GM12878 (cell line): ENCODE measurements at regions of chr19 and their contacts with region 1.

Region 1: GRCh38 chr19:10245189-10245939 is 6.7 kb upstream of the MRPL4 start:
- DNase-seq: no peak
- ATAC-seq: peak; percentile 74
- H3K4me3 ChIP-seq: no peak overlapping the region
- H3K27ac ChIP-seq: peak overlapping the region; percentile 55
- H3K4me1 ChIP-seq: peaks cover 54% of the 10 kb centered on the region
- H3K27me3 ChIP-seq: no peaks in the 10 kb centered on the region
- CTCF ChIP-seq: no peak
- EP300 ChIP-seq: no peak
- POLR2A ChIP-seq: no peak
- RAD21 ChIP-seq: no peak

Region 2: DNA sequence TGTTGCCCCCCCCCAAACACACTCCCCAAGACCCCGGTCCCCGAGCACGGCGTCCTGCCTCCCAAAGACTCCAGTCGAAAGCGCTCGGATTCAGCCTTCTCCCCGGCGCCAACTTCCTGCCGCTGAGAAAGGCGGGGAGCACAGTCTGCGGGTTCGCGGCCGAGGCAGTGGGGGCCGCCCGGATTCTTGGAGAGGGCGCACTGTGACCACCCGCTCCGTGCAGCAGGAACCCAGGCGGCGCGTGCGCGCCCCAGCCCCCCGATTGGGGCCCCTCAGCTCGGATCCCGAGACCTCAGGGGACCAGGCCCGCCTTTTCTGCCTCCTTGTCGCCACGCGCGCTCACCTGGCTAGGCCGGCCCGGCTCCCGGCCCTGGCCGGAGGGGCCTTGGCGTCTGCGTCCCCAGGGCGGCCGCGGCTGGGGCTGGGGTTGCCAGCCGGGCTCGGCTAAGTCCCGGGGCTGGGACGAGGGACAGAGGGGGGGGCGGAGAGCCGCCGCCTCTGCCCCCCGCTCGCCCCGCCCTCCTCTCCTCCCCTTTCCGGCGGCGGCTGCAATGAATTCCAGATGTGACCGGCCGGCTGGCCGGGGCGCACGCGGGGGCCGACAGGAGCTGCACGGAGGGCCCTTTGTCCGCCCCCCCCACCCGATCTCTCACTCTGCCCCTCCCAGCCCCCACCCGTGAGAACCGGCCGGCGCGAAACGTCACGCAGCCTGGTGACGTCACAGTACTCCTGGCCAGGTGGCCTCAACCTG is 14.3 kb before region 1 on chr19 and contains the start of gene S1PR2:
- CTCF ChIA-PET with region 1: interaction called, 148 read pairs
- POLR2A ChIA-PET with region 1: interaction called, 35 read pairs
- RAD21 ChIA-PET with region 1: interaction called, 98 read pairs
- SMC1A ChIA-PET with region 1: interaction called, 78 read pairs
- in situ Hi-C with region 1: no loop called
- intact Hi-C with region 1: loop called (anchors 1 kb)
- DNase-seq: no peak
- ATAC-seq: peak; percentile 67
- H3K4me3 ChIP-seq: peak within 1 kb of the TSS; percentile 90
- H3K27ac ChIP-seq: peak within 1 kb of the TSS; percentile 97
- H3K4me1 ChIP-seq: peaks cover 44% of the 10 kb centered on the region
- H3K27me3 ChIP-seq: no peaks in the 10 kb centered on the region
- CTCF ChIP-seq: 0 out of 6 replicates have a peak, but pooled peaks of 1 of the 3 experiments have one; percentile 19
- EP300 ChIP-seq: no peak
- POLR2A ChIP-seq: peak; percentile 81
- RAD21 ChIP-seq: no peak
- polyA plus RNA-seq, gene S1PR2: 4.9 to 9.6 TPM

Region 3: DNA sequence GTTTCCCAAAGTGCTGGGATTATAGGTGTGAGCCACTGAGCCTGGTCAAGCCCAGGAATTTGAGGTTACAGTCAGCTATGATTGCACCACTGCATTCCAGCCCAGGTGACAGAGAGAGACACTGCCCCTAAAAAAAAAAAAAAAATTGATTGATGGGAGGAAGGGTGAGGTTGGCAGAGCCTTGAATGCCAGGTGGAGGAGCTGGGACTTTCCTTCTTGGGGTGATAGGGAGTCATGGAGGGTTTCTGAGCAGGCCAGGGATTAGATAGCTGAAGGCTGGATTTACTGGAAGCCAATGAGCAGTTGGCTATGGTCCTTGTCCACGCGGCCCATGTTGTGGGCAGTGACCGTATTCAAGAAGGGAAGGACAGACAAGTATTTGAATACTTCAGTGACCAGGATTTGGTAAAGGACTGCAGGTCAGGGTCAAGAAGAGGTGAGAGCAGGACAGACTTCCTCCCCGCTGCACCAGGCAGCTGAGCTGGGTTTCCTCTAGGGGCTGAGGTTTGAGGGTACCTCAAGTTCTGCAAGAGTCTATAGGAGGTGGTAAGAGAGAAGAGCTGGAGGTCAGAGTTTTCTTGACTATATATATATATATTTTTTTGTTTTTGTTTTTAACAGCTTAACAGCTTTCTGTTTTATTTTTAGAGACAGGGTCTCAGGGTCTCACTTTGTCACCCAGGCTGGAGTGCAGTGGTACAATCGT is 34.5 kb after region 1 on chr19:
- CTCF ChIA-PET with region 1: no interaction called
- POLR2A ChIA-PET with region 1: no interaction called
- RAD21 ChIA-PET with region 1: no interaction called
- SMC1A ChIA-PET with region 1: no interaction called
- in situ Hi-C with region 1: no loop called
- intact Hi-C with region 1: no loop called
- DNase-seq: no peak
- ATAC-seq: peak; percentile 30
- H3K4me3 ChIP-seq: peak overlapping the region; percentile 47; the same call in 1 of the 2 replicates
- H3K27ac ChIP-seq: no peak overlapping the region
- H3K4me1 ChIP-seq: peaks cover 11% of the 10 kb centered on the region
- H3K27me3 ChIP-seq: no peaks in the 10 kb centered on the region
- CTCF ChIP-seq: no peak
- EP300 ChIP-seq: no peak
- POLR2A ChIP-seq: peak; percentile 32; the same call in 1 of the 2 replicates
- RAD21 ChIP-seq: no peak

Region 4: DNA sequence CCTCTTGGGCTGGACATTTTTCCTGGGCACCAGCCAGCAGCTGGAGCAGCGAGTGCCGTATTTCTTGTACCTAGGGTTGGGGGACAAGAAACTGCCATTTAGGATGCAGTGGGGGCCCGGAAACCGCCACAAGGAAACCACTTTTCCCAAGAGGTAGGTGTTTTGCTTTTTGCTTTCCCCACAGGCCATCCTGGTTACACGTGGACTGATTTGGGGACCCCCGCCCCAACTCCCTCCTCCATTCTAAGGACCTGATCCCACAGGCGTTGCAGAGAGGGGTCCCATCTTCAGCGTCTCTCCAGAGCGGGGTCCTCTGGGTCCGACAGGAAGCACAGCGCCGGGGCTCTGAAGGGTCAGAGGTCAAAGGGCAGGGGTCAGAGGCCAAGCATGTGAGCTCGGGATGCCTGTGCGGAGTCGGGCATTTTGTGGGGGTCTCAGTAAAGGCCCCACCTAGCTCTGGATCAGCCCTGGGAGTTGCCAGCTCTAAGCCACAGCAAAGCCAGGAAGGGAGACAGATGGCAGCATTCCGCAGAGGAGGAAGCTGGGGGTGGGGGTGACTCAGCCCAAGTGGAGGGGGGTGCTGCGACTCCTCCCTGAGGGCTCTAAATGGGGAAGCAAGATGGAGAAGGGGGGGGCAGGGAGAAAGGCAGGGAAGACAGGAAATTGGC is 59.9 kb after region 1 on chr19:
- CTCF ChIA-PET with region 1: no interaction called
- POLR2A ChIA-PET with region 1: no interaction called
- RAD21 ChIA-PET with region 1: no interaction called
- SMC1A ChIA-PET with region 1: no interaction called
- in situ Hi-C with region 1: no loop called
- intact Hi-C with region 1: no loop called
- DNase-seq: no peak
- ATAC-seq: no peak
- H3K4me3 ChIP-seq: no peak overlapping the region
- H3K27ac ChIP-seq: no peak overlapping the region
- H3K4me1 ChIP-seq: no peaks in the 10 kb centered on the region
- H3K27me3 ChIP-seq: no peaks in the 10 kb centered on the region
- CTCF ChIP-seq: no peak
- EP300 ChIP-seq: no peak
- POLR2A ChIP-seq: no peak
- RAD21 ChIP-seq: no peak